ENCODE measurements at regions of chr16 and their contacts with region 1.

Region 1: DNA sequence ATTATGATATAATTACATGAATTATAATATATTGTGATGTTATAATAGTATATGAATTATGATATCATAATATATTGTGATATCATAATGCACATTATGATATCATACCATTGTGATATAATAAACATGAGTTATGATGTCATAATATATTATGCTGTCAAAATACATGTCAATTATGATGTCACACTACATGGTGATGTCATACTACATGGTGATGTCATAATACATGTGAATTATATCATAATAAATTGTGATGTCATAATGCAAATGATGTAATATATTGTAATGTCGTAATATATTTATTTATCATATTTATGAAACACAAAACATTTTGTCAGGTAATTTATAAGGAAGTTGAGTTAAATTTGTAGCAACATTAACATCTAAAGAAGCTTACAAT is 1950.1 kb downstream of the TP53TG3F start:
- DNase-seq: no peak

Region 2: DNA sequence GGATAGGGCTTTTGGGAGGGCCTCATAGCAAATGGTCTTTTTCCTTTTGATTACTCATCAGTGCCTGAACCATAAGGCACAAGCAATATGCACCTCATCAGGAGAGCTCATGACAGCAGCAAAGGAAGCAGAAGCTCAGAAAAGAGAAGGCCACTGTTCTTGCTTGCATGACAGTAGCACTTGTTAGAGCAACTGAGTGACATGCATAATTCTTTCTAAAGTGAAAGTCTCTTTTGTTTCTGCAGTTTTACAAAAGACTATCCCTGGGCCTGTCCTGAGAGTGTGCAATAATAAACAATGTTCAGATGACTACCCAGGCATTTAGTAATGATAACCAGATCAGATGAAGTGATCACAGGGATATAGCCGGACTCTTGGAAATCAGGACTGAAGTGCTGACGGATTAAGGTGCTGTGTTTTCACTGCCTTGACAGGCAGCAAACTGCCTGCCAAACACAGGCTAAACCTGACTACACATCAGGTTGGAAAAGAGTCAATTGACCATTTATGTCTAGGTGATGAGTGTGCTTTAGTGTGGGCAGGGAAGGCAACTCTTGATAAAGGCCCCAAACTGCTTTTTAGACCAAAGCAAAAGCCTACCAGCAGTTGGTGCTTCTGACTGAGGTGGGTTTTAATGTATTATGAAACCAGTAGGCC is 89.8 kb before region 1 on chr16:
- intact Hi-C with region 1: loop called (anchors 10 kb)
- DNase-seq: peak in 6 of 42 donors; percentile 4 to 43 (median 22)

Region 3: DNA sequence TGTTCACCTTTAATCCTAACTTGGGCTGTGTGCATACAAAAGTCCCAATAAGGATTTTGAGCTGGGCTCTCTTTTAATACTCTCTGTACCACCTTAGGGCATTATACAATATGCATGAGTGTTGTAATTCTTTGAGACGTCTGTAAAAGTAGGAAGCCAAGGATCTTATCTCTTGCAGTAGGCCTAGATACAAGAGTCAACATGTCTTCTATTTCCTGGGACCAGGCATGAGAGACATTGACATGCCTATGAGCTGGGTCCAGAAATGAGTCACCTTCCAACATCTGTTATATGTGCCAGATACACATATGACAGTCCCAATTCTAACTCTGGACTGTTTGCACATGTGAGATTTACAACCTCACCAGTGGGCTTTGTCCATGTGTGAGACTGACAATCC is 38.9 kb before region 1 on chr16:
- intact Hi-C with region 1: loop called (anchors 5 kb)
- DNase-seq: no peak

Region 4: GRCh38 chr16:35463358-35463757 is 53.9 kb after region 1 on chr16:
- intact Hi-C with region 1: no loop called
- DNase-seq: no peak

Region 5: DNA sequence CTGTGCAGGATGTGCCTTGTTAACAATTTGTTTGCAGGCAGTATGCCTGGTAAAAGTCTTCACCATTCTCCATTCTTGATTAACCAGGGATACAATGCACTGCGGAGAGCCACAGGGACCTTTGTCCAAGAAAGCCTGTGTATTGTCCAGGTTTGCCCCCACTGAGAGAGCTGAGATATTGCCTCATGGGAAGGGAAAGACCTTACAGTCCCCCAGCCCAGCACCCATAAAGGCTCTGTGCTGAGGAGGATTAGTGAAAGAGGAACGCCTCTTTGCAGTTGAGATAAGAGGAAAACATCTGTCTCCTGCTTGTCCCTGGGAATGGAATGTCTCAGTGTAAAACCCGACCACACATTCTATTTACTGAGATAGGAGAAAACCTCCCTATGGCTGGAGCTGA is 219.5 kb after region 1 on chr16:
- intact Hi-C with region 1: no loop called
- DNase-seq: no peak

Measured in head of caudate nucleus (tissue), 42 donors.